Caco-2 (cell line): ENCODE measurements at regions of chr20 and their contacts with region 1.

Region 1: DNA sequence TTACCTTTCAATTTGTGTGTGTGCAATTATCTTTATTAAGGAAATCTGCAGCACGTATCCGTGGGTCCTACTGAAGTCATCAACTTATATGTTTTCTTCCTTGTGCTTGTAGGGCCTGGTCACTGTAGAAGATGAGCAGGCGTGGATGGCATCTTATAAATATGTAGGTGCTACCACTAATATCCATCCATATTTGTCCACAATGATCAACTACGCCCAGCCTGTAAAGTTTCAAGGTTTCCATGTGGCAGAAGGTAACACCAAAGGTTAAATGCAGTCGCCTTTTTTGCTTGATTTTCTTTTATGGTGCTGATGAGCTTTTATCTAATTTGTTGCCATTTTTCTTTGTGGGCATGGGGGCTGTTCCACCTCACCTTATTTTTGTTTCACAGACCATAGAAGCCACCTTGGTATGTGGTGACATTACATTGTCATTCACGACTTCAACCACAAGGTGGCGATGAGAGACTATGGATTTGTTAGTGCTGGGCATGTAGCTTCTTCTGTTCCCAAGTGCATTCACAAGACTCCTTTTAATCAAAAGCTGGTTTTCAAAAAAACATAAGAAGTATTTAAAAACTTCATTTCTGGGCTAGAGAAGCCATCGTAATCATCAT is 106.5 kb upstream of the LAMP5 start:
- DNase-seq: peak; percentile 66 to 76
- H3K4me3 ChIP-seq: no peak overlapping the region
- H3K4me3 Mint-ChIP-seq: no peak overlapping the region
- H3K27ac Mint-ChIP-seq: no peak overlapping the region
- H3K4me1 ChIP-seq: no peaks in the 10 kb centered on the region
- H3K4me1 Mint-ChIP-seq: no peaks in the 10 kb centered on the region
- H3K27me3 ChIP-seq: no peaks in the 10 kb centered on the region
- H3K27me3 Mint-ChIP-seq: no peaks in the 10 kb centered on the region
- CTCF ChIP-seq: peak; percentile 79 to 81

Region 2: DNA sequence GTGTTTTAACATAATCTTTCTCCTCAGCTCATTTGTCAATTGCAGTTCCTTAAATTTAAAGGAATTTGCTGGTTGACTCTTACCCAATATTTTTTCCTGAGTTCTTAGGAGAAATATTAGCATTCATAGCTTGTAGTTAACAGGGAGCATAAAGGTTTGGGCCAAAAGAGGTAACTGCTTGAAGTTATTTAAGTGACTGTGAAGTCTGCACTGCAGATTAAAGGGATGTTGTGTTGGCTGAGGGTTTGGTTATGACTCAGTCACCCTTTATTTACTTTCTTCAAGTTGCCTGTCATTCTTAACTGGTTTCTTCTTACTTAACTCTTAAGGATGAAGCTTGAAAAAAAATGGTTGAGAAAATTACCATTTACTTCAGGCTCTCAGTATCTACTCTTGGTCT is 113.9 kb before region 1 on chr20:
- CTCF ChIA-PET with region 1: no interaction called
- POLR2A ChIA-PET with region 1: no interaction called
- intact Hi-C with region 1: no loop called
- DNase-seq: no peak
- H3K4me3 ChIP-seq: no peak overlapping the region
- H3K4me3 Mint-ChIP-seq: no peak overlapping the region
- H3K27ac Mint-ChIP-seq: no peak overlapping the region
- H3K4me1 ChIP-seq: no peaks in the 10 kb centered on the region
- H3K4me1 Mint-ChIP-seq: no peaks in the 10 kb centered on the region
- H3K27me3 ChIP-seq: no peaks in the 10 kb centered on the region
- H3K27me3 Mint-ChIP-seq: no peaks in the 10 kb centered on the region
- CTCF ChIP-seq: no peak

Region 3: GRCh38 chr20:9458138-9458796 is 50.4 kb after region 1 on chr20:
- CTCF ChIA-PET with region 1: interaction called, 3 read pairs
- POLR2A ChIA-PET with region 1: no interaction called
- intact Hi-C with region 1: loop called (anchors 1 kb)
- DNase-seq: peak in 1 of 2 experiments; percentile 37
- H3K4me3 ChIP-seq: no peak overlapping the region
- H3K4me3 Mint-ChIP-seq: no peak overlapping the region
- H3K27ac Mint-ChIP-seq: no peak overlapping the region
- H3K4me1 ChIP-seq: no peaks in the 10 kb centered on the region
- H3K4me1 Mint-ChIP-seq: no peaks in the 10 kb centered on the region
- H3K27me3 ChIP-seq: no peaks in the 10 kb centered on the region
- H3K27me3 Mint-ChIP-seq: no peaks in the 10 kb centered on the region
- CTCF ChIP-seq: peak in 1 of 2 experiments; percentile 41

Region 4: DNA sequence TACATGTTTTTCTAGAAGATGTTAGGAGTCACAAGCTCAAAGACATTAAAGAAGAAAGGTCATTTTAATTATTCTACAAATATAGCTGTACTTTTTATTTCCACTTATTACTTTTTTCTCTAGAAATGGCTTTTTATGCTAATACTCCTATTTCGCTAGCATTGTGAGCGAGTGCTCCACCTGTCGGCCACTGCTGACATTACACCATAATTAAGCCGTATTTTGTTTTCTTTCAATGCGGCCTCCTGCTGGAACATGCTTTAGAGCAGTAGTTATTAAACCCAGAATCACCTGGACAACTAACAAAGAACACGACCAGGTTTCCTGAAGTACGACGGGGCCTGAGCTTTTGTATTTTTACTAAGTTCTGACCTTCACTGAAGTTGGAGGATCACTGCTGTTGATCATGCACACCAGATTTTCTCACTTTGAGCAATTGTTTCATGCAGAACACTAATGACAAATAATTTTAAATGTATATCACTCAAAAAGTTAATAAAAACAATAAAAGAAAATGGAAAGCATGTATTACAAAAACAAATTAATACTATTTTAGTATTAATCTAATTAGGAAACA is 505.0 kb after region 1 on chr20:
- CTCF ChIA-PET with region 1: no interaction called
- POLR2A ChIA-PET with region 1: no interaction called
- intact Hi-C with region 1: loop called (anchors 10 kb)
- DNase-seq: peak; percentile 40 to 57
- H3K4me3 ChIP-seq: no peak overlapping the region
- H3K4me3 Mint-ChIP-seq: no peak overlapping the region
- H3K27ac Mint-ChIP-seq: no peak overlapping the region
- H3K4me1 ChIP-seq: no peaks in the 10 kb centered on the region
- H3K4me1 Mint-ChIP-seq: no peaks in the 10 kb centered on the region
- H3K27me3 ChIP-seq: no peaks in the 10 kb centered on the region; the same call in 1 of the 2 replicates
- H3K27me3 Mint-ChIP-seq: peaks cover 20% of the 10 kb centered on the region
- CTCF ChIP-seq: peak; percentile 74 to 83